ENCODE measurements at regions of chr6 and their contacts with region 1.

Region 1: GRCh38 chr6:134097114-134097707 is 44.8 kb upstream of the SLC2A12 start:
- DNase-seq: peak in 1 of 3 donors; percentile 60
- ATAC-seq: peak; percentile 71 to 85 (median 80)
- H3K4me3 ChIP-seq: no peak overlapping the region
- H3K27ac ChIP-seq: no peak overlapping the region
- H3K4me1 ChIP-seq: no peaks in the 10 kb centered on the region
- H3K27me3 ChIP-seq: no peaks in the 10 kb centered on the region
- CTCF ChIP-seq: peak; percentile 60 to 80 (median 66)
- POLR2A ChIP-seq: no peak

Region 2: DNA sequence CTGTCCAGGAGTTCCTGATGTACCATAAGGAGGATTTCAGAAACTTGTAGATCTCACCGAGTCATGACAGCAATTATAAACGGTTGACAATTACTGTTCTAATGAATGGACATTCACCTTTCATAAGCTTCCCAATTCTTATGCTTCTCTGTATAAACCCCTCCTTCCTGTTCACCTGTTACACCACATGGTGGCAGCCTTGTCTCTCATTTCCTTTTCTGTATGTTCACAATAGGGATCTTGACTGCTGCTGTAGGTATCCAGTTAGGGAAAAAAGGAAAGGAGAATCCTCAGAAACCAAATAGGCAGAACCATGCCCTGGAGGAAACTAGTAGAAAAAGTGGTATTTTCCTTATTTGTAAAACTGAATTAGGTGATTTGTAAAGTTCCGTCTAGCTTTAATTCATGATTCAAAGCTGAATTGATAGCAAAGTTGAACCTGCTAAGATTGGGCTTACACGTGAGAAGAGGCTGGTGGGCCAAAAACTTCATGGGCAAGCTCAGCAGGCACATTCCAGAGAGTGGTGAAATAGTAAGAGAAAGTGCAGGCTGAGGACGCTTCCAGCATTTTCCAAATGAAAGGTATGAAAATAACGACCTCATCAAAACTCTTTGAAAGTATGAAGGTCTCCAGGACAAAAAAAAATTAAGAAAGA is 173.1 kb before region 1 on chr6:
- intact Hi-C with region 1: loop called (anchors 10 kb)
- DNase-seq: peak in 2 of 3 donors; percentile 21 to 70
- ATAC-seq: peak; percentile 97 to 99 (median 99)
- H3K4me3 ChIP-seq: no peak overlapping the region
- H3K27ac ChIP-seq: no peak overlapping the region
- H3K4me1 ChIP-seq: no peaks in the 10 kb centered on the region
- H3K27me3 ChIP-seq: no peaks in the 10 kb centered on the region
- CTCF ChIP-seq: peak; percentile 87 to 96 (median 88)
- POLR2A ChIP-seq: no peak

Region 3: DNA sequence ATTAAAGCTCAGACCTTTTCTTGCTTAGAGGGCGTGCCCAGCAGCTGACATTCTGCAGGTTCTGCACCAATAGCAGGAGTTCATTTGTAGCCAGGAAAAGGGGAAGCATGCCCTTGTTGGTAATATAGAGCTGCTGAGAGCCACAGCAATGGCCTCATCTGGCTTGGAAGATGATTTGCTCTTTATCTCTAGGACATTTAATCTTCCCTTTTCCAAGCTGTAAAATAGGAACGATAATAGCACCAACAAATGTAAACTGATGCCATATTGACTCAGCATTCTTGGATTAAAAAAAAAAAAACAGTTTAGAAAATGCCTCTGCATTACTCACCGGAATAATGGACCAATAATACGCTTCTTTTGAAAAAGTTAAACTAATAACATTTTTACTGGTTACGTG is 48.6 kb after region 1 on chr6:
- intact Hi-C with region 1: no loop called
- DNase-seq: no peak
- ATAC-seq: no peak
- H3K4me3 ChIP-seq: no peak overlapping the region
- H3K27ac ChIP-seq: no peak overlapping the region
- H3K4me1 ChIP-seq: no peaks in the 10 kb centered on the region
- H3K27me3 ChIP-seq: no peaks in the 10 kb centered on the region
- CTCF ChIP-seq: no peak
- POLR2A ChIP-seq: no peak

Measured in right lobe of liver (tissue), 6 donors.